Calu3 (cell line): ENCODE measurements at regions of chr17 and their contacts with region 1.

Region 1: DNA sequence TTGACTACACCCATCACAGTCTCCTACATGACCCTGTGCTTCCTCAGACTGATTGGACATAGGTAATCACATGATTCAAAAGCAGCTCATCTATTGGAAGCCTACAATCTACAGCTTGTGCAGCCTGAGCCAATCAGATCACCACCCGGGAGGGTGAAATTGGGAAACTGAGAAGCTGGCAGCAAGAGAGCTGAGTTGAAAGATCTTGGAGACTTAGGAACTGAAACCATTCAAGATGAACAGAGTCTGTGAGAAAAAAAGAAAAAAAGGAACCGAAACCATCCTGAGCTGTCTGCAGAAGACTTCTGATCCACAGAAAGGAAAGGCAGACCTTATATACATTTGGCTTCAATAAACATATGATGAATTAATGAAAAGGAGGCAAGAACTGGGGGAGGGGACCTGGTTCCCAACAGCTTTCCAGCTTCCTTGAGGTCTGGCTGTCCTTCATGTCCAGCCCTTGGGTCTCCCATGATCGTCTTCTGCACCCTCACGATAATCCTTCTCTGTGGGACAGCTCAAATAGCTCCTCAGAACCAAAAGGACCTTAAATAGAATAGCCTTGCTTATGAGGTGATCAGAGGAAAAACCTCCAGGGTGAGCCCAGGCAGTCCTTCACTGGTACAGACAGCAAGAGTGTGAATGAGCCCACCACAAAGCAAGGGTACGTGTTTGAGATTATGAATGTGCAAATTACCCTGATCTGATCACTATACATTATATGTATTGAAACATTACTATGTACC is 32.6 kb downstream of the PLXDC1 start:
- DNase-seq: no peak
- H3K4me3 Mint-ChIP-seq: no peak overlapping the region
- H3K27ac Mint-ChIP-seq: no peak overlapping the region
- H3K4me1 Mint-ChIP-seq: no peaks in the 10 kb centered on the region
- H3K27me3 Mint-ChIP-seq: peaks cover 89% of the 10 kb centered on the region
- CTCF ChIP-seq: no peak

Region 2: GRCh38 chr17:39026980-39027451 is 91.8 kb before region 1 on chr17:
- CTCF ChIA-PET with region 1: no interaction called
- intact Hi-C with region 1: no loop called
- DNase-seq: peak; percentile 83
- H3K4me3 Mint-ChIP-seq: peak overlapping the region; percentile 70
- H3K27ac Mint-ChIP-seq: no peak overlapping the region
- H3K4me1 Mint-ChIP-seq: peaks cover 7% of the 10 kb centered on the region
- H3K27me3 Mint-ChIP-seq: peaks cover 70% of the 10 kb centered on the region
- CTCF ChIP-seq: no peak

Region 3: GRCh38 chr17:39054111-39054645 is 64.7 kb before region 1 on chr17:
- CTCF ChIA-PET with region 1: no interaction called
- intact Hi-C with region 1: no loop called
- DNase-seq: no peak
- H3K4me3 Mint-ChIP-seq: no peak overlapping the region
- H3K27ac Mint-ChIP-seq: no peak overlapping the region
- H3K4me1 Mint-ChIP-seq: peaks cover 23% of the 10 kb centered on the region
- H3K27me3 Mint-ChIP-seq: peaks cover 51% of the 10 kb centered on the region
- CTCF ChIP-seq: no peak

Region 4: GRCh38 chr17:39094607-39095308 is 24.1 kb before region 1 on chr17:
- CTCF ChIA-PET with region 1: interaction called, 10 read pairs
- intact Hi-C with region 1: no loop called
- DNase-seq: no peak
- H3K4me3 Mint-ChIP-seq: no peak overlapping the region
- H3K27ac Mint-ChIP-seq: no peak overlapping the region
- H3K4me1 Mint-ChIP-seq: no peaks in the 10 kb centered on the region
- H3K27me3 Mint-ChIP-seq: peaks cover 75% of the 10 kb centered on the region
- CTCF ChIP-seq: no peak

Region 5: GRCh38 chr17:39138431-39139136 is 19.7 kb after region 1 on chr17:
- CTCF ChIA-PET with region 1: interaction called, 15 read pairs
- intact Hi-C with region 1: no loop called
- DNase-seq: no peak
- H3K4me3 Mint-ChIP-seq: no peak overlapping the region
- H3K27ac Mint-ChIP-seq: no peak overlapping the region
- H3K4me1 Mint-ChIP-seq: no peaks in the 10 kb centered on the region
- H3K27me3 Mint-ChIP-seq: peaks cover 51% of the 10 kb centered on the region
- CTCF ChIP-seq: no peak

Region 6: GRCh38 chr17:39144416-39144840 is 25.6 kb after region 1 on chr17:
- CTCF ChIA-PET with region 1: interaction called, 14 read pairs
- intact Hi-C with region 1: no loop called
- DNase-seq: peak; percentile 87
- H3K4me3 Mint-ChIP-seq: no peak overlapping the region
- H3K27ac Mint-ChIP-seq: no peak overlapping the region
- H3K4me1 Mint-ChIP-seq: peaks cover 11% of the 10 kb centered on the region
- H3K27me3 Mint-ChIP-seq: peaks cover 47% of the 10 kb centered on the region
- CTCF ChIP-seq: no peak